Activated CD4-positive, alpha-beta T cell treated with anti-CD3 and anti-CD28 coated beads for 36 hours (primary cell): ENCODE measurements at regions of chr16 and their contacts with region 1.

Region 1: DNA sequence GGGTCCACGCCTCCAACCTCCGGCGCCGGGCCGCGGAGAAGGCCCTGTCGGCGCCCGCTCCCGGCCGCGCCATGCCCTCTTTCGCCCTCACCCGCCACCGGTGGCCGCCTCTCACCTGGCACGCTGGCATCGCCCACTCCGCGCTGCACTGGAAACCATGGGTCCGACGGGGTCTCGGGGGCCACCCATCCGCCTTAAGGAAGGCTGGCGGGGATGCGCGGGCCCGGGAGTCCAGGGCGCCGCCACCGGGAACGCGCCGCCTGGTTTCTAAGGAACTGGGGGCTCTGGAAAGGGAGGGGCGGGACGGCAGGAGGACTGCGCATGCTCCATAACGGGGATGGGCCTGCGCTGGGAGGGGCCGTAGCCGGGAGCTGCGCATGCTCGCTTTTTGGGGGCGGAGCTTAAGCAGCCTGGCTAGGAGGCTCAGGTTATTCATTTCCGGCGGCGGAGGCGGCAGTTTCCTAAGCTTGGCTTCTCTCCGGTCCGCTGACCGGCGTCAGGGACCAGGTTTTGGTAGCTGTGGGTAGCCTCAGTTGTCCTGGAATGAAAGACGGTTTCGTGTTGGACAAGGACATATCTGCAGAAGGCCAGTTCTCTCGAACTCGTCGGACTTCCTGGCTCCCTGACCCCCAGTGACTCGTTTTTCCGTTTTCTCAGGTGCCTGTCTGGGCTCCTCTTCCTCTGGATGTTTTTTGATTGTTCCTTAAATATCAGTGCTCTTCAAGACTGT is at the start of gene GFOD2:
- DNase-seq: peak; percentile 99
- ATAC-seq: peak; percentile 95
- H3K4me3 Mint-ChIP-seq: peak within 1 kb of the TSS; percentile 82
- H3K27ac Mint-ChIP-seq: peak within 1 kb of the TSS; percentile 98
- H3K4me1 Mint-ChIP-seq: peaks cover 29% of the 10 kb centered on the region
- H3K27me3 Mint-ChIP-seq: no peaks in the 10 kb centered on the region
- total RNA-seq, gene GFOD2: 8.7 to 11.5 TPM

Region 2: DNA sequence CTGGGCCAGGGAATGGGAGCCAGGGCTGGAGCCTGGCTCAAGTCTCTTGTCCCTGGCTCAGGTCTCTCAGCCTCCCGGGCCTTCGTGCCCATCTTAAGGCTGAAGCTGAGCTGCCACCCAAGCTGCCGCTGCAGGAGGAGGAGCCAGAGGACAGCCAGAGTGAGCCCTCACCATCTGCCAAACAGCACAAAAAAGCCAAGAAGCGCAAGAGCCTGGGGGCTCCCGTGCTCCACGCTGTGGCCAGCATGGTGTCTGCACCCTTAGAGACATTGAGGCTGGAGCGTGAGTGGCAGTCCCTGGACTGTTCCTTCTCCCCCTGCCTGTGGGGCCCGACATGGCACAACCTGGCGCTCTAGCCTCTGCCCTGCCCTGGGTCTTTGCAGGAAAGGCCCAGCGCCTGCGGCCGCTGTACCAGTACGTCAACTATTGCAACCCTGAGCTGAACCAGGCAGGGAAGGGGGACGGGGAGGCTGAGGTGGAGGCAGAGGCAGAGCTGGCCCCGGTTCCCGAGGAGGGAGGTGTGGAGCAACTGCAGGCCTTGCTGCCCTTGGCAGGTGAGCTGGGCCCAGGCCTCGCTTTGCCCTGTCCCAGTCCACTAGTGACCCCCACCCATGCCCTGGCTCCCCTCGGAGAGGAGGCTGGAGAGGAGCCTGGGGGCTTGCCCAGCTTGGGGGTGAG is 51.3 kb before region 1 on chr16:
- CTCF ChIA-PET with region 1: interaction called, 4 read pairs
- POLR2A ChIA-PET with region 1: no interaction called
- intact Hi-C with region 1: loop called (anchors 1 to 5 kb)
- DNase-seq: peak; percentile 92
- ATAC-seq: peak; percentile 91
- H3K4me3 Mint-ChIP-seq: no peak overlapping the region
- H3K27ac Mint-ChIP-seq: no peak overlapping the region
- H3K4me1 Mint-ChIP-seq: peaks cover 19% of the 10 kb centered on the region
- H3K27me3 Mint-ChIP-seq: no peaks in the 10 kb centered on the region

Region 3: GRCh38 chr16:67672739-67673662 is 46.2 kb before region 1 on chr16:
- CTCF ChIA-PET with region 1: interaction called, 4 read pairs
- POLR2A ChIA-PET with region 1: no interaction called
- intact Hi-C with region 1: loop called in 1 of 2 experiments (anchors 5 kb)
- DNase-seq: peak; percentile 77
- ATAC-seq: peak; percentile 25
- H3K4me3 Mint-ChIP-seq: no peak overlapping the region
- H3K27ac Mint-ChIP-seq: no peak overlapping the region
- H3K4me1 Mint-ChIP-seq: peaks cover 3% of the 10 kb centered on the region
- H3K27me3 Mint-ChIP-seq: no peaks in the 10 kb centered on the region

Region 4: GRCh38 chr16:67833418-67834241 is 114.4 kb after region 1 on chr16:
- CTCF ChIA-PET with region 1: interaction called, 3 read pairs
- POLR2A ChIA-PET with region 1: no interaction called
- intact Hi-C with region 1: loop called in 1 of 2 experiments (anchors 1 kb)
- DNase-seq: peak; percentile 97
- ATAC-seq: peak; percentile 100
- H3K4me3 Mint-ChIP-seq: peak overlapping the region; percentile 87
- H3K27ac Mint-ChIP-seq: peak overlapping the region; percentile 78
- H3K4me1 Mint-ChIP-seq: peaks cover 9% of the 10 kb centered on the region
- H3K27me3 Mint-ChIP-seq: no peaks in the 10 kb centered on the region

Region 5: DNA sequence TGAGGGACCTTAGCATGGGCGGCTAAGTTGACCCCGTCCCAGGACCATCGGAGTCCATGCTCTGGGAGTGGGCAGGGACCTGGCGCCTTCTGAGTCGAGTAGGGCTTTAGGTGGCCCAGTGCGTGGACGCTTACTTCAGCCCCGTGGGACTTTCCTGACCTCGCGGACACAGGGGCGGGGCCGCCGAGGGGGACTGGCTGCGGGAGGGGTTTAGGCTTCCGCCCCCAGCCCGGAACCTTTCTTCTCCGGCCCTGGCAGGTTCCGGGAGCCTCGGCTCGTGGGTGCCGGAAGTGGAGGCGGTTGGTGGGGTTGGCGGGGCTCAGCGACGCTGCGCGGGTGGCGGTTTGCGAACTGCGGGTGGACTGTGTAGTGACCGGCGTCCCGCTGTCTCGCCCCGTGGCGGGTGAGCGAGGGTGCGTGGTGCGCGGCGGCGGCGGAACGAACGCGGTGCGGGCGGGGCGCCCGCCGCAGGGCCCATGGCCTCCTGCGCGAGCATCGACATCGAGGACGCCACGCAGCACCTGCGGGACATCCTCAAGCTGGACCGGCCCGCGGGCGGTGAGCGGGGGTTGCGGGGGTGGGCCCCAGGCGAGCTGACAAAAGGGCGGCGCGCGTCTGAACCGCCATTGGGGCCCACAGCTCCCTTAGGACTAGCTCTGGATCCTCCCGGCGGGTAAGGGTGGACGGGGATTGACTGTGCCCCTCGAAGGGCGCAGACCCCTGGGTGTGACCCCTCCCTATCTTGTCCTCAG is 153.7 kb after region 1 on chr16 and contains the start of gene EDC4:
- CTCF ChIA-PET with region 1: no interaction called
- POLR2A ChIA-PET with region 1: no interaction called
- intact Hi-C with region 1: loop called in 1 of 2 experiments (anchors 1 kb)
- DNase-seq: peak; percentile 92
- ATAC-seq: peak; percentile 89
- H3K4me3 Mint-ChIP-seq: peak within 1 kb of the TSS; percentile 77
- H3K27ac Mint-ChIP-seq: peak within 1 kb of the TSS; percentile 92
- H3K4me1 Mint-ChIP-seq: peaks cover 30% of the 10 kb centered on the region
- H3K27me3 Mint-ChIP-seq: no peaks in the 10 kb centered on the region
- total RNA-seq, gene EDC4: 92.8 to 96.9 TPM